ENCODE measurements at regions of chr16 and their contacts with region 1.

Region 1: DNA sequence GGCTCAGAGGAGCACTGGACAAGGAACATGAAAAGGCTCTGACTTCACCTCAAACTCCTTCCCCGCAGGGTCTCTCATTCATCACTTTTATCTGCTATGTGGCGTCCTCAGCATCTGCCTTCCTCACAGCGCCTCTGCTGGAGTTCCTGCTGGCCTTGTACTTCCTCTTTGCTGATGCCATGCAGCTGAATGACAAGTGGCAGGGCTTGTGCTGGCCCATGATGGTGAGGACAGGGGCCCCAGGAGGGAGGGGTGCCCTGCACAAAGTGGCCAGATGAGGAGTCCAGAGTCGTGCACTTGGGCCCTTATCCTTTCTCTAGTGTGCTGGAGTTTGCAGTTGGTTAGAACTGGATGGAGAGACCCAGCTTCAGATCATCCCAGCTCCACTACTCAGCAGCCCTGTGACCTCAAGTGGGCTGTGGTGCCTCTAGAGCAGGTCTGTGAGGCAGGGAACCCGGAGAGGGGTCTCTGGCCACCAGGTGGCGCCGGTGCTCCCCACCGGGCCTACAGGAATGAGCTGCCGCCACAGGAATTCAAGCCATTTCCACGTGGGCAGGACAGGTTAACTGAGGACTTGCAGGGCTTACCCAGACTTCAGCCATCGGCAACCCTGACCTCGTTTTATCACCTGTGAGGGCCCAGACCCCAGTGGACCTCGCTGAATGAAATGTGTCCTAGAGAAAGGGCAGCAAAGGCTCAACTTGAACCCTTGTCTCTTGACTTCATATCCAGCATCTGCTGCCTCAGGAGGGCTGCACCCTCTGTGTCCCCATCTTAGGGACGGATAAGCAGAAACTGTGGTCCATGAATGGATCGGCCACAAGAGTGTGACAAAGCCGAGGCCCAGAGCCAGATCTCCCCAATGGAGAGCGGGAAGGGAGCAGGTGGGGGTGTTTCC is 4.0 kb downstream of the CMTM3 start:
- DNase-seq: peak; percentile 69
- ATAC-seq: peak; percentile 26
- H3K4me3 Mint-ChIP-seq: no peak overlapping the region
- H3K27ac Mint-ChIP-seq: no peak overlapping the region
- H3K4me1 Mint-ChIP-seq: peaks cover 36% of the 10 kb centered on the region
- H3K27me3 Mint-ChIP-seq: peaks cover 14% of the 10 kb centered on the region
- CTCF ChIP-seq: no peak

Region 2: GRCh38 chr16:66406534-66407221 is 201.8 kb before region 1 on chr16:
- CTCF ChIA-PET with region 1: interaction called, 10 read pairs
- POLR2A ChIA-PET with region 1: no interaction called
- intact Hi-C with region 1: loop called (anchors 1 kb)
- DNase-seq: peak; percentile 81
- ATAC-seq: peak; percentile 92
- H3K4me3 Mint-ChIP-seq: peak overlapping the region; percentile 69
- H3K27ac Mint-ChIP-seq: no peak overlapping the region
- H3K4me1 Mint-ChIP-seq: peaks cover 16% of the 10 kb centered on the region
- H3K27me3 Mint-ChIP-seq: peaks cover 34% of the 10 kb centered on the region
- CTCF ChIP-seq: no peak

Region 3: GRCh38 chr16:66521951-66522771 is 86.3 kb before region 1 on chr16:
- CTCF ChIA-PET with region 1: no interaction called
- POLR2A ChIA-PET with region 1: interaction called, 4 read pairs
- intact Hi-C with region 1: loop called (anchors 1 kb)
- DNase-seq: peak; percentile 62
- ATAC-seq: peak; percentile 33
- H3K4me3 Mint-ChIP-seq: peak overlapping the region; percentile 69
- H3K27ac Mint-ChIP-seq: peak overlapping the region; percentile 93
- H3K4me1 Mint-ChIP-seq: peaks cover 97% of the 10 kb centered on the region
- H3K27me3 Mint-ChIP-seq: no peaks in the 10 kb centered on the region
- CTCF ChIP-seq: no peak

Region 4: GRCh38 chr16:66562407-66562806 is 46.1 kb before region 1 on chr16:
- CTCF ChIA-PET with region 1: interaction called, 6 read pairs
- POLR2A ChIA-PET with region 1: no interaction called
- intact Hi-C with region 1: loop called (anchors 2 kb)
- DNase-seq: no peak
- ATAC-seq: no peak
- H3K4me3 Mint-ChIP-seq: no peak overlapping the region
- H3K27ac Mint-ChIP-seq: no peak overlapping the region
- H3K4me1 Mint-ChIP-seq: peaks cover 12% of the 10 kb centered on the region
- H3K27me3 Mint-ChIP-seq: no peaks in the 10 kb centered on the region
- CTCF ChIP-seq: no peak

Region 5: DNA sequence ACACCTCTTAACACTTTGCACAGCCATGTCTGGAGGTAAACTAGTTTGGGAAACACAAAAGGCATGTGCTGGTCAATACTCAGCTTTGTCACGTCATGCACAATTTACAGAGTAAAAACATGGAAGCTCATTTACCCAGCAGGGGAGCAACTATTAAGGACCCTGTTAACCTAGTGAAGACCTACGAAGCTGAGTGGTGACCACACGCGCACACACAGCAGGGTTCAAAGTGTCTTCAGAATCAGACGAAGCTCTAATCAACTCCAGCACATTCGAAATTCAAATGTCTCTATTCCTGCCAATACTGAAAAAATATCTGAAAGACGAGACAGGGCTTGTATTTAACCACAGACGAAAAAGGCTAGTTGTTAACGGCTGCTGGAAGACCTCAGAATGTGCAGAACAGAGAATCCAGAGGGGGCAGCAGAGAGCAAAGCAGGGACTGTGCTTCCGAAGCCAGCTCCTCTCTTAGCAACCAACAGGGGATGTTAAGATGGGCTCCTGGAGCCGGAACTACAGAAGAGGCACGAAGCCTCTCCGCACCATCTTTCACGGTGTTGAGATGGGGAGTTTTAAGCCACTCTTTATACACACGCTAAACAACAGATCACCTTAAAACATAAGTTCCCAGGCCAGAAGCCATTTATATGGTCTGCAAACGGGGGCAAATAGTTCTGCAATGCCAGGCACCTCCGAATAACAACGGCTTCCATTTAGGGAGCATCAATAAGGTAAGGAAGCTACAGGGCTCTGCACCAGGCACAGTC is 42.4 kb after region 1 on chr16:
- CTCF ChIA-PET with region 1: interaction called, 13 read pairs
- POLR2A ChIA-PET with region 1: no interaction called
- intact Hi-C with region 1: loop called (anchors 2 kb)
- DNase-seq: peak; percentile 42
- ATAC-seq: peak; percentile 92
- H3K4me3 Mint-ChIP-seq: peak overlapping the region; percentile 66
- H3K27ac Mint-ChIP-seq: no peak overlapping the region
- H3K4me1 Mint-ChIP-seq: peaks cover 8% of the 10 kb centered on the region
- H3K27me3 Mint-ChIP-seq: peaks cover 25% of the 10 kb centered on the region
- CTCF ChIP-seq: peak; percentile 84

Region 6: GRCh38 chr16:66728117-66728787 is 119.8 kb after region 1 on chr16:
- CTCF ChIA-PET with region 1: no interaction called
- POLR2A ChIA-PET with region 1: no interaction called
- intact Hi-C with region 1: loop called (anchors 10 kb)
- DNase-seq: no peak
- ATAC-seq: peak; percentile 60
- H3K4me3 Mint-ChIP-seq: no peak overlapping the region
- H3K27ac Mint-ChIP-seq: no peak overlapping the region
- H3K4me1 Mint-ChIP-seq: peaks cover 2% of the 10 kb centered on the region
- H3K27me3 Mint-ChIP-seq: no peaks in the 10 kb centered on the region
- CTCF ChIP-seq: peak; percentile 71

Region 7: DNA sequence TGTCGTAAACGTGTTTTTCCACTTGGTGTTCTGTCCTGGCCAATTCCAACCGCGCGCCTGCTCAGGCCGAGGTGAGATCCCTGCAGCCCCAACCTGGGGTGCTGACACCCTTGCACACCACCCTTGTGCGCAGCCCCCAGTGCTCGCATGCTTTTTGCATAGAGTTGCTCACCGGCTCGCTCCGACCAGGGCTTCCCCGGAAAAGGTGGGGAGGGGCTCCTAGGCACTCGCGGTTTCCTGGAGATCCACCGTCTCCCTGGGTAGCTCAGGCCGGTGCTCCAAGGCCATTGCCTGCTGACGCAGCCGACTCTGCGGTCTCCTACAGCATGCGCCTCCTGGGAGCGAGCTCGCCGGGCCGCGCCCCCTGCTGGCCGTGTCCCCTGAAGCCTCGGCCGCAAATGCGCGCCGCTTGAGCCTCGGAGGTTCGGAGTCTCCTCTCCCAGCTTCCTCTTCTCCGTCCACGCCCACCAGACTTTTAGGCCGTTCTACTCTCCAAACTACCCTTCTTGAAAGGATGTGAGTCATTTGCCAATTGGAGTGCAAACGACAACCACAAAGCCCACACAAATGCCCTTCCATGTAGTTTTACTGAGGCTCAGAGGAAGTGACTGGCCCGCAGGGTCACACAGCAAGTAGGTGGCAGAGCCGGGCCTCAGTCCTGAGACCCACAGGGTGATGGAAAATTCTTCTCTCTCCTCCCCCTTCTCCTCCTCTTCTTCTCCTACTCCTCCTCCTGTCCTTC is 264.6 kb after region 1 on chr16:
- CTCF ChIA-PET with region 1: interaction called, 4 read pairs
- POLR2A ChIA-PET with region 1: no interaction called
- intact Hi-C with region 1: loop called (anchors 5 kb)
- DNase-seq: peak; percentile 87
- ATAC-seq: peak; percentile 95
- H3K4me3 Mint-ChIP-seq: peak overlapping the region; percentile 80
- H3K27ac Mint-ChIP-seq: peak overlapping the region; percentile 76
- H3K4me1 Mint-ChIP-seq: peaks cover 15% of the 10 kb centered on the region
- H3K27me3 Mint-ChIP-seq: no peaks in the 10 kb centered on the region
- CTCF ChIP-seq: peak; percentile 51

Region 8: DNA sequence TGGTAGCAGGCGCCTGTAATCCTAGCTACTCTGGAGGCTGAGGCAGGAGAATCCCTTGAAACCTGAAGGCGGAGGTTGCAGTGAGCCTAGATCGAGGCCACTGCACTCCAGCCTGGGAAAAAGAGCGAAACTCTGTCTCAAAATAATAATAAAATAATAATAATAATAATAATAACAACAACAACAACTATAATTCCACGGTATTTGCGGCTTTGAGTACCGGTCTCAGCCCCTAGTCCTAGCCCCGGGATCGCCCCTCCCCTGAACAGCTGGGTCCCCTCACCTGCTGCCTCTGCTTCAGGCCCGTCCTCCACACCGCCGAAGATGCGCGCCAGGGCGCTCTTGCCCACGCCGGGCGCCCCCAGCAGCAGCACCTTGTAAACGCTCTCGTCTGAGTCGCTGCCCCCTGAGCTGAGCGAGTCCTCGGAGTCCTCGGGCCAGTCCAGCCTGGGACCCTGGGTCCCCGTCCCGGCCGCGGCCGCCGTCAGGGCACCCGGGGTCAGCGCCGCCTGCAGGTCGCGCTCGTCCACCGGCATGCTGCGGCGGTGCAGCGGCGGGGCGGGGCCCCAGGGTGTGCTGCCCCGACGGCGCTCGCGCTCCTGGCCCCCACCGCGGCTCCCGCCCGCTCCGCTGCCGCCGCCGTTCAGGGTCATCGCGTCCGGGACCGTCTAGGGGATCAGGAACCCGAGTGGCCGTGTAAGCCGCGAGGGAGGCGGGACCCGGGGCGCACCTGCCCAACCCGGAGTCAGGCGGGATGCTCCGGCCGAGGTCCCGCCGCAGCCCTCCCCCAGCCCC is 316.2 kb after region 1 on chr16:
- CTCF ChIA-PET with region 1: no interaction called
- POLR2A ChIA-PET with region 1: no interaction called
- intact Hi-C with region 1: no loop called
- DNase-seq: no peak
- ATAC-seq: peak; percentile 80
- H3K4me3 Mint-ChIP-seq: peak overlapping the region; percentile 76
- H3K27ac Mint-ChIP-seq: no peak overlapping the region
- H3K4me1 Mint-ChIP-seq: peaks cover 9% of the 10 kb centered on the region
- H3K27me3 Mint-ChIP-seq: peaks cover 33% of the 10 kb centered on the region
- CTCF ChIP-seq: no peak